Right ventricle myocardium superior (tissue), 1 donor: ENCODE measurements at regions of chr5 and their contacts with region 1.

Region 1: DNA sequence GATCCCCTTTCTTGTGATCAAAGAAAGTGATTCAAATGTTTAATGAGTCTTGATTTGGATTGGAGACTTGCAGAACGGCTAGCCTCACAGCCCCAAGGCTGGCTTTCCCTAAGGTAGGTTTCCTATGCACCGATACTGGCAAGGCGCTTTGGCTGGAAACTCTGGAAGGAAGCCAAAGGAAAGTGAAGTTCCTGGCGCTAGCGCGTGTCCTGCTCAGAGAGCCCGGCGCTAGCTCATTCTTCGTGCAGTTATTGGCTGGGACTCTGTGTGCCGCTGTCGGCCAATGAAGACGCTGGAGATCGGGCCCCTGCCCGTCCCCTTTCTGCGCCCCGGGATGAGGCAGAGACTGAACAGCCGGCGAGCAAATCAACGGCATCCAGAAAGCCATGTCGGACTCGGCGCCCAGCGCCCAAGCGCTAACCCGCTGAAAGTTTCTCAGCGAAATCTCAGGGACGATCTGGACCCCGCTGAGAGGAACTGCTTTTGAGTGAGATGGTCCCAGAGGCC is at the start of gene PCDHGC3:
- DNase-seq: peak; percentile 95
- ATAC-seq: peak; percentile 98
- total RNA-seq, gene PCDHGC3: 17.1 TPM

Region 2: DNA sequence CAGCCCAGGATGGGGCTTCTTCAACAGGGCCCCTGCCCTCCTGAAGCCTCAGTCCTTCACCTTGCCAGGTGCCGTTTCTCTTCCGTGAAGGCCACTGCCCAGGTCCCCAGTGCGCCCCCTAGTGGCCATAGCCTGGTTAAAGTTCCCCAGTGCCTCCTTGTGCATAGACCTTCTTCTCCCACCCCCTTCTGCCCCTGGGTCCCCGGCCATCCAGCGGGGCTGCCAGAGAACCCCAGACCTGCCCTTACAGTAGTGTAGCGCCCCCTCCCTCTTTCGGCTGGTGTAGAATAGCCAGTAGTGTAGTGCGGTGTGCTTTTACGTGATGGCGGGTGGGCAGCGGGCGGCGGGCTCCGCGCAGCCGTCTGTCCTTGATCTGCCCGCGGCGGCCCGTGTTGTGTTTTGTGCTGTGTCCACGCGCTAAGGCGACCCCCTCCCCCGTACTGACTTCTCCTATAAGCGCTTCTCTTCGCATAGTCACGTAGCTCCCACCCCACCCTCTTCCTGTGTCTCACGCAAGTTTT is 36.8 kb after region 1 on chr5:
- intact Hi-C with region 1: loop called (anchors 2 kb)
- DNase-seq: peak; percentile 89
- ATAC-seq: peak; percentile 43